Activated B cell treated with CpG ODN at 0.5 μM for 24 hours (primary cell): ENCODE measurements at regions of chr11 and their contacts with region 1.

Region 1: GRCh38 chr11:35126000-35126878 is 12.7 kb upstream of the CD44 start:
- DNase-seq: peak; percentile 49
- ATAC-seq: peak; percentile 71
- H3K4me3 Mint-ChIP-seq: peak overlapping the region; percentile 76
- H3K27ac Mint-ChIP-seq: peak overlapping the region; percentile 97
- H3K4me1 Mint-ChIP-seq: peaks cover 85% of the 10 kb centered on the region
- H3K27me3 Mint-ChIP-seq: no peaks in the 10 kb centered on the region
- CTCF ChIP-seq: no peak

Region 2: GRCh38 chr11:35013514-35014233 is 112.6 kb before region 1 on chr11:
- CTCF ChIA-PET with region 1: no interaction called
- POLR2A ChIA-PET with region 1: interaction called, 15 read pairs
- intact Hi-C with region 1: no loop called
- DNase-seq: no peak
- ATAC-seq: peak; percentile 47
- H3K4me3 Mint-ChIP-seq: peak overlapping the region; percentile 59
- H3K27ac Mint-ChIP-seq: peak overlapping the region; percentile 90
- H3K4me1 Mint-ChIP-seq: peaks cover 43% of the 10 kb centered on the region
- H3K27me3 Mint-ChIP-seq: no peaks in the 10 kb centered on the region
- CTCF ChIP-seq: no peak

Region 3: GRCh38 chr11:35087648-35088047 is 38.6 kb before region 1 on chr11:
- CTCF ChIA-PET with region 1: interaction called, 3 read pairs
- POLR2A ChIA-PET with region 1: interaction called, 43 read pairs
- intact Hi-C with region 1: loop called (anchors 1 kb)
- DNase-seq: no peak
- ATAC-seq: no peak
- H3K4me3 Mint-ChIP-seq: no peak overlapping the region
- H3K27ac Mint-ChIP-seq: peak overlapping the region; percentile 87
- H3K4me1 Mint-ChIP-seq: peaks cover 67% of the 10 kb centered on the region
- H3K27me3 Mint-ChIP-seq: no peaks in the 10 kb centered on the region
- CTCF ChIP-seq: no peak

Region 4: GRCh38 chr11:35144136-35144741 is 18.0 kb after region 1 on chr11:
- CTCF ChIA-PET with region 1: interaction called, 6 read pairs
- POLR2A ChIA-PET with region 1: interaction called, 222 read pairs
- intact Hi-C with region 1: loop called (anchors 1 kb)
- DNase-seq: peak; percentile 63
- ATAC-seq: peak; percentile 62
- H3K4me3 Mint-ChIP-seq: peak overlapping the region; percentile 97
- H3K27ac Mint-ChIP-seq: peak overlapping the region; percentile 90
- H3K4me1 Mint-ChIP-seq: peaks cover 81% of the 10 kb centered on the region
- H3K27me3 Mint-ChIP-seq: no peaks in the 10 kb centered on the region
- CTCF ChIP-seq: no peak